ENCODE measurements at regions of chr12 and their contacts with region 1.

Region 1: DNA sequence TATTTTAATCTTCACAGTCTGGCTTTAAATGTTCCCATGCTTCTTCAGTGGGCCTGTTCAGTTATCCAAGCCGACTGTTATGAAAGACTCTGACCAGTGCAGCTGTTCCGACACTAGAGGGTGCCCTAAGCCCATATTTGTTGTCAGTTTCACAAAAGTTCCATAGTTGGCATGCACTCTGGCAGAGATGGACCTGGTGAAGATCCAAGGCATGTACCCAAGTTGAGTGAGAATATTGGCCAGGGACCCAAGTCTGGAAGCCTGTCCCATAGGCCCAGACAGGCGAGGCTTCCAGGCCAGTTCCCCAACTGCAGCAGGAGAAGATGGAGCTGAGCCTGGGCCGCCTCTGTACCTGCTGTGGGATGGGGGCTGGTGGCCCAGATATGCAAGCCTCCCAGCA is 27.4 kb upstream of the GUCY2C start:
- DNase-seq: peak; percentile 70
- ATAC-seq: peak; percentile 77
- H3K4me3 Mint-ChIP-seq: no peak overlapping the region
- H3K27ac Mint-ChIP-seq: no peak overlapping the region
- H3K4me1 Mint-ChIP-seq: peaks cover 3% of the 10 kb centered on the region
- H3K27me3 Mint-ChIP-seq: peaks cover 10% of the 10 kb centered on the region
- CTCF ChIP-seq: peak; percentile 91

Region 2: GRCh38 chr12:14739489-14739888 is 15.7 kb after region 1 on chr12:
- CTCF ChIA-PET with region 1: interaction called, 10 read pairs
- POLR2A ChIA-PET with region 1: no interaction called
- intact Hi-C with region 1: no loop called
- DNase-seq: no peak
- ATAC-seq: no peak
- H3K4me3 Mint-ChIP-seq: no peak overlapping the region
- H3K27ac Mint-ChIP-seq: no peak overlapping the region
- H3K4me1 Mint-ChIP-seq: no peaks in the 10 kb centered on the region
- H3K27me3 Mint-ChIP-seq: no peaks in the 10 kb centered on the region
- CTCF ChIP-seq: no peak

Measured in activated CD8-positive, alpha-beta T cell treated with anti-CD3 and anti-CD28 coated beads for 36 hours (primary cell).